ENCODE measurements at regions of chr20 and their contacts with region 1.

Region 1: GRCh38 chr20:37178839-37179670 is at the starts of genes MROH8 and RPN2:
- DNase-seq: peak; percentile 92
- ATAC-seq: peak; percentile 96
- H3K4me3 Mint-ChIP-seq: peak within 1 kb of the TSS; percentile 94
- H3K27ac Mint-ChIP-seq: peak within 1 kb of the TSS; percentile 95
- H3K4me1 Mint-ChIP-seq: peaks cover 24% of the 10 kb centered on the region
- H3K27me3 Mint-ChIP-seq: no peaks in the 10 kb centered on the region
- total RNA-seq, gene MROH8: 2.0 to 2.5 TPM
- total RNA-seq, gene RPN2: 126 to 135 TPM

Region 2: DNA sequence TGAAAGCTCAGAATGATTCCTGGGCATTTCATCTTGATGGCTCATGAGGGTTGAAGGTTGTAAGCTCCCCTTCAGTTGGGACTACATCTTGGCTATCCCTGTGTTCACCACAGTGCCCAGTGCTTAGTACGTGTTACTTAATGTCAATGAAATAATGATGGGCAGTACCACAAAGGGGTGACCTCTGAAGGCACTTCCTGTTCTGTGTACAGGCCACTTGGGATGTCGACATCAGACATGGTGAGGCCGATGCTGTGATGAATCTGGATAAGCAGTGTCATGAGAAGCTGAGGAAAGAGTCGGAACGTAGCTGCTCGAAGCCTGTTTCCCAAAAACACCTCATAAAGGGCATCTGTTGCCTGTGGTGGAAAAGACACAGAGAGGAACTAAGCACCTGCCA is 55.6 kb before region 1 on chr20:
- POLR2A ChIA-PET with region 1: no interaction called
- DNase-seq: no peak
- ATAC-seq: no peak
- H3K4me3 Mint-ChIP-seq: no peak overlapping the region
- H3K27ac Mint-ChIP-seq: no peak overlapping the region
- H3K4me1 Mint-ChIP-seq: no peaks in the 10 kb centered on the region
- H3K27me3 Mint-ChIP-seq: no peaks in the 10 kb centered on the region

Region 3: DNA sequence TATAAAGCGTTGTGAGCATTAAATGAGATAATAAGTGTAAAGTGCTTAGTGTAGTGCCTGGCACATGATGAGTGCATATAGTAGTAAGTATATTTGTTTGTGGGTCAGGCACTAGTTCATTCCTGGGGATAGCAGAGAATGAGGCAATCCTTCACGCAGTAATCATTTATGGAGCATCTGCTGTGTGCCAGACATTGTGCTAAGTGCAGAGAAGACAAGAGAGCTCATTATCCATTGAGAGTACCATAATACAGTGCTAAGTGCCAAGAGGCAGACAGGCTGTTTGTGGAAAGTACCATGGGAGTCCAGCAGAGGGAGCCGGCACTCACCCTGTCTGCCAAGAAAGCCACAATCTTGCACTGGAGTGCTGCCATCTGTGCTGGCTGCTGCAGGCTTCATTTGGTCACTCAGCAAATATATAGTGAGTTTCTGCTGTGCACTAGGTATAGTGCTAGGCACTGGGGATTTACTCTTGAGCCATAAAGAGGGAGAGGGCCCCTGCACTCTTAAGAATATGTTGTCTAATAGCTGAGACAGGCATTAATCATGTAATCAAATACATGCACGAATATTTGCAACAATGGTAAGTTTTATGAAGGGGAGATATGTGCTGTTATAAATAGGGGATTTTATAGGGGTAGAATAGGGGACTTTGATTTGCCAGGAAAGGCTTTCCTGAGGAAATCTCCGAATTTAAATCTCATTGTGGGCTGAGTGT is 13.2 kb after region 1 on chr20:
- POLR2A ChIA-PET with region 1: interaction called, 21 read pairs
- DNase-seq: peak; percentile 68
- ATAC-seq: peak; percentile 68
- H3K4me3 Mint-ChIP-seq: no peak overlapping the region
- H3K27ac Mint-ChIP-seq: peak overlapping the region; percentile 56
- H3K4me1 Mint-ChIP-seq: peaks cover 56% of the 10 kb centered on the region
- H3K27me3 Mint-ChIP-seq: no peaks in the 10 kb centered on the region

Region 4: DNA sequence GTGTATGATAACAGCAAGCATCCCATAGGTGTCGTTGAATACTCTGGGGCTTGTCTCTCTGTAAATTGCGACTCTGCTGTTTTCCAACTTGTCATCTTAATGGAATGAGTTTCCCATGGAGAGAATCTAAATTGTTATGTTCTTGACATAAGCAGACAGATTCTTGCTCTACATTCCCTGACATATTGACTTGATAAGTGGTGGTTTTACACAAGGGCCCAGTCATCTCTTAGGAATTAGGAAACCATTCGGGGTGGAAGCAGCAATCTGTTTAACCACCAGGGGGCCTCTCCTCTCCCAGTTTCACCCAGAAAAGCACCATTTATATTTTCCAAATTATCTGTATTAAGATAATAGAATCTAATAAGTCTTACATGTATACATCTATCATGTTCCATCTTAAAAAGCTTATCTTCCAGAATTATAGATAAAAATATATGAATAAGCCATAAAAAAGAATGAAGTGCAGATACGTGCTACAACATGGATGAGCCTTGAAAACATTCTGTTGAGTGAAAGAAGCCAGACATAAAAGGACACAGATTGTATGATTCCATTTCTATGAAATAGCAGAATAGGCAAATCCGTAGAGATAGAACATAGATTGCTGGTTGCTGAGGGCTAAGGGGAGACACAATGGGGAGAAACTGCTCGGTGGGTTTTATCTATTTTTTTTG is 23.4 kb after region 1 on chr20:
- POLR2A ChIA-PET with region 1: no interaction called
- DNase-seq: no peak
- ATAC-seq: no peak
- H3K4me3 Mint-ChIP-seq: no peak overlapping the region
- H3K27ac Mint-ChIP-seq: no peak overlapping the region
- H3K4me1 Mint-ChIP-seq: peaks cover 4% of the 10 kb centered on the region
- H3K27me3 Mint-ChIP-seq: no peaks in the 10 kb centered on the region

Region 5: GRCh38 chr20:38460040-38460623 is 1281.1 kb after region 1 on chr20:
- POLR2A ChIA-PET with region 1: no interaction called
- DNase-seq: no peak
- ATAC-seq: no peak
- H3K4me3 Mint-ChIP-seq: no peak overlapping the region
- H3K27ac Mint-ChIP-seq: no peak overlapping the region
- H3K4me1 Mint-ChIP-seq: no peaks in the 10 kb centered on the region
- H3K27me3 Mint-ChIP-seq: peaks cover 4% of the 10 kb centered on the region

Measured in activated naive CD8-positive, alpha-beta T cell treated with anti-CD3 and anti-CD28 coated beads, Interleukin-2, amount 10 ng/mL, durations not matched to agents 7 days and 5 days (primary cell).